Ascending aorta (tissue), 2 donors: ENCODE measurements at regions of chr11 and their contacts with region 1.

Region 1: GRCh38 chr11:46238967-46239800 is 38.3 kb upstream of the CREB3L1 start:
- DNase-seq: peak; percentile 50 to 93
- H3K4me3 ChIP-seq: peak overlapping the region; percentile 60 to 86
- H3K27ac ChIP-seq: no peak overlapping the region
- H3K4me1 ChIP-seq: peaks cover 12 to 20% of the 10 kb centered on the region in 2 donors
- H3K27me3 ChIP-seq: no peaks in the 10 kb centered on the region
- CTCF ChIP-seq: peak; percentile 96 to 99 (median 98)

Region 2: GRCh38 chr11:46050003-46050461 is 189.2 kb before region 1 on chr11:
- intact Hi-C with region 1: no loop called
- DNase-seq: peak in 1 of 2 donors; percentile 61
- H3K4me3 ChIP-seq: no peak overlapping the region
- H3K27ac ChIP-seq: no peak overlapping the region
- H3K4me1 ChIP-seq: peaks cover 0 to 21% of the 10 kb centered on the region in 2 donors
- H3K27me3 ChIP-seq: no peaks in the 10 kb centered on the region
- CTCF ChIP-seq: no peak

Region 3: DNA sequence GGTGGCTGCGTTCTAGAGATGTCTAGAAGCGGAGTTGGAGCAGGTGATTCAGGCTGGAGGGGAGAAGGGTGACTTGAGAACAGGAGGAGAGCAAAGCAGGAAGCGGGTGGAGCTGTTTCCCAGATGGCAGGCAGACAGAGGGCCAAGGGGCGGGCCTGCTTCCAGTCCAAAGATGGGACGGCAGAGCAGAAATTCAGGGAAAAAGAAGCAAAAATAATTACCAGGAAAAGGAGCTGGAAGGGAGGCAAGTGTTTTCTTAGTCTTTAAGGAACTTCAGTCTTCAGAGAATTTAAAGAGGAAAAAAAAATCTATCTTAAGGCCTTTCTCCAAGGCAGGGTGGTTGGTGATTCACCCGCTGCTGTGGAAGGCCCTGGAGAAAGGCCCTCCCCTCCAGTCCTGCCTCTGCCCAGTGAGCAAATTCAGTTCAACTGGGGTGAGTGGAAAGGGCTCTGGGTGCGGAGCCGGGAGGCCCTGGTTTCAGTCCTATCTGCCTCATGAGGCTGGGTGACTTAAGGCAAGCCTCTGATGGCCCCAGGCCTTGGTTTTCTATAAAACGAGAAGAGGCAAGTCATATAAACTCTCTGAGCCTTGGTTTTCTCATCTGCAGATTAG is 33.7 kb after region 1 on chr11:
- intact Hi-C with region 1: loop called (anchors 1 kb)
- DNase-seq: peak in 1 of 2 donors; percentile 81
- H3K4me3 ChIP-seq: no peak overlapping the region
- H3K27ac ChIP-seq: peak overlapping the region; percentile 79 to 84
- H3K4me1 ChIP-seq: peaks cover 6 to 38% of the 10 kb centered on the region in 2 donors
- H3K27me3 ChIP-seq: no peaks in the 10 kb centered on the region
- CTCF ChIP-seq: no peak

Region 4: GRCh38 chr11:46285173-46285572 is 46.0 kb after region 1 on chr11:
- intact Hi-C with region 1: no loop called
- DNase-seq: no peak
- H3K4me3 ChIP-seq: no peak overlapping the region
- H3K27ac ChIP-seq: no peak overlapping the region
- H3K4me1 ChIP-seq: no peaks in the 10 kb centered on the region
- H3K27me3 ChIP-seq: no peaks in the 10 kb centered on the region
- CTCF ChIP-seq: no peak

Region 5: GRCh38 chr11:46295312-46296058 is 56.3 kb after region 1 on chr11:
- intact Hi-C with region 1: loop called (anchors 1 kb)
- DNase-seq: peak in 1 of 2 donors; percentile 84
- H3K4me3 ChIP-seq: peak overlapping the region; percentile 52 to 77
- H3K27ac ChIP-seq: no peak overlapping the region
- H3K4me1 ChIP-seq: peaks cover 7 to 27% of the 10 kb centered on the region in 2 donors
- H3K27me3 ChIP-seq: no peaks in the 10 kb centered on the region
- CTCF ChIP-seq: no peak

Region 6: GRCh38 chr11:46308631-46309419 is 69.6 kb after region 1 on chr11:
- intact Hi-C with region 1: loop called (anchors 1 kb)
- DNase-seq: peak in 1 of 2 donors; percentile 85
- H3K4me3 ChIP-seq: no peak overlapping the region
- H3K27ac ChIP-seq: no peak overlapping the region
- H3K4me1 ChIP-seq: no peaks in the 10 kb centered on the region
- H3K27me3 ChIP-seq: no peaks in the 10 kb centered on the region
- CTCF ChIP-seq: peak; percentile 85 to 91 (median 87)

Region 7: DNA sequence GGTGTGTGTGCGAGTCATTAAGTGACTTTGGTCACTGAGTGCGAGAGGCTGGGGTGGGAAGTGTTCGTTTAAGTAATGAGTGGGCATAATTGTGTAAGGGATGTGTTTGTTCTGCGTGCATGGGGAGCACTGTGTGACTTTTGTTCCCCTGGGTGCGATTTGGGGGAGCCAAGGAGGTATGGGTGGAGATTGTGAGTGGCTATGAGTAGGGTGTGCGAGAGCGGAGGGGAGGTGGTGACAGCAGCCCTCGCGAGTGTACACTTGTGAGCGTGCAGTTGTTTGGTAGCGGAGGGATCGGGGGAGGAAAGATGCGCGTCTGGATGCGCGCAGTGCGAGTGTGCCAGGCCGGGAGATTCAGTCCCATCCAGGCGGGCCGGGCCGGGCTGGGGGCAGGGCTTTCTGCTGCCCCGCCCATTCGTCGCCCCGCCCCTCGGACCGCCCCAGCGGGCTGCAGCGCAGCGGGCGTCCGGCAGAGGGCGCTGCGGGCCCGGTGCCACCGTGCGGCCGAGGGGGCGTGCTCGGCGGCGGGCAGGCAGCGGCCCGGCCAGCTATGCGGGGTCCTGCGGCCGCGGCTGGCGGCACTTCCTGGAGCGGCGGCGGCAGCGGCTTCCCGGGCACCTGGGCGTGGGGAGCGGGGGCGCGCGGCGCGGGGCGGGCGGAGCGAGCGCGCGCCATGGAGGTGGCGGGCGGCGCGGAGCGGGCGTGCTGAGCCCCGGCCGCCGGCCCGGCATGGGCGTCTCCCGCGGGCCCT is 107.9 kb after region 1 on chr11 and contains the start of gene DGKZ:
- intact Hi-C with region 1: loop called (anchors 1 kb)
- DNase-seq: peak; percentile 47 to 92
- H3K4me3 ChIP-seq: peak within 1 kb of the TSS; percentile 73 to 96
- H3K27ac ChIP-seq: peak within 1 kb of the TSS in 1 of 2 donors; percentile 37
- H3K4me1 ChIP-seq: peaks cover 9 to 14% of the 10 kb centered on the region in 2 donors
- H3K27me3 ChIP-seq: no peaks in the 10 kb centered on the region
- CTCF ChIP-seq: peak; percentile 43 to 100 (median 59)
- total RNA-seq, gene DGKZ: 123 TPM

Region 8: DNA sequence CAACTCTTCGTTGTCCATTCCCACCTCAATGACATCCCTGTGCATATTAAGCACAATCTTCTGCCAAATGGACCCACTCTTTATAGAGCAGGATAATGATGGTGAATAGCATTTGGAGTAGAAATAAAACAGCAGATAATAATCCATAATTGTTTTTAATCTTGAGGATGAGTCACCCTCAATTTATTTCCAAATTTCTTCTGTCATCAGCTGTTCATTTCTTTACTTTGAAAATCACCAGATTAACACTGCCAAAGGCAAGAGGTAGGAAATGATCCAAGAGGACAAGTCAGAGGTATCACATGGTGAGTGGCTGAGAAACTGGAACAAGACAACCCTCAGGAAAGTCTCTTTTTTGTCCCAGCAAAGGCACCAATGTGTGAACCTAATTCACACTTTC is 361.9 kb after region 1 on chr11:
- intact Hi-C with region 1: no loop called
- DNase-seq: no peak
- H3K4me3 ChIP-seq: no peak overlapping the region
- H3K27ac ChIP-seq: no peak overlapping the region
- H3K4me1 ChIP-seq: no peaks in the 10 kb centered on the region
- H3K27me3 ChIP-seq: no peaks in the 10 kb centered on the region
- CTCF ChIP-seq: no peak